Activated T-helper 2 cell treated with anti-CD3 and anti-CD28 coated beads, Interferon-gamma antibody, Interleukin-2, Interleukin-4, amounts not matched to agents 10 μg/mL and 5 μg/mL and 100 μg/mL, durations not matched to agents 14 hours and 24 hours and 36 hours (primary cell): ENCODE measurements at regions of chr4 and their contacts with region 1.

Region 1: GRCh38 chr4:168153596-168154440 is 61.5 kb downstream of the ANXA10 start:
- DNase-seq: peak; percentile 23
- H3K4me3 Mint-ChIP-seq: no peak overlapping the region
- H3K27ac Mint-ChIP-seq: no peak overlapping the region
- H3K4me1 Mint-ChIP-seq: peaks cover 1% of the 10 kb centered on the region
- H3K27me3 Mint-ChIP-seq: peaks cover 5% of the 10 kb centered on the region

Region 2: DNA sequence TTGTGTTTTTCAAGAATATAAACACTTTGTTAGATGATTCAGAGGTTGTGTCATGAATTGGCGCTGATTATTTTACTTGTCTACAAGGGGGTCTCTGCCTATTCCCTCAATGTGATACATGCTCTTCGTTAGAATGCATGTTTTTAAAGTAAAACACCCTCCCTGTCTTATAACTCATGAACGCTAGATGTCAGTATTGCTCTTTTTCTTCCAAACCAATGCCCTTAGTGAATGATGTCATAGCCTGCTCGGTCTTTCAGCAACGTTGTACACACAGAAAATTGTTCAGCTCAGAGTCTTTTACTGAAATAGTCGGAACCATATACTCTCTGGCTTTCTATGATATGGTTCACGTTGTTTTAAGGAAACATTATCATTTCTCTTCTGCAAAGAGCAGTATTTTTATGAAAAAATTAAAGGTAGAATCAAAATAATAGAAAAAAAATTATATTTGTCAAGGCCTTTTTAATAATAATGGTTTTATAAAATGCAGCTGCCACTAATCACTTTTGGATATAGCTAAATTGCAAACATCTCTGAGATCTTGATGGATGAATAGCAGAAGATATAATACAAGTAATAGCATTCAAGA is 1987.9 kb before region 1 on chr4:
- intact Hi-C with region 1: loop called (anchors 10 kb)
- DNase-seq: no peak
- H3K4me3 Mint-ChIP-seq: no peak overlapping the region
- H3K27ac Mint-ChIP-seq: no peak overlapping the region
- H3K4me1 Mint-ChIP-seq: no peaks in the 10 kb centered on the region
- H3K27me3 Mint-ChIP-seq: no peaks in the 10 kb centered on the region

Region 3: DNA sequence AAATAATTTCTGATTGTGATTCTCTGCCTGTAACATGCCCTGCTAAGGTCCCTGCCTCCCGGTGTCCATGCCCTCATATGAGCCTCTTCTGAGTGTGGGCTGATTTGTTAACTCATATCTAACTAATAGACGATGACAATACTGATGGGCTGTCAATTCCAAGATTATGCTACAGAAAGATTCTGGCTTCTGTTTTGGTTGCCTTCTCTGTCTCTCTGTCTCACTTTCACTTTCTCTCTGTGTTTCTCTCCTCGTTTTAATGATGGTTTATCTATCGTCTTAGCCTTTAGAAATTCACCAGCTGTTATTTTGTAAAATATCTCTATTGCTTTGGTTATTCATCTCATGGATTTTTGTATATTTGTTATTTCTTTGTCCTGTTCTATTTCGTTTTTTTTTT is 374.0 kb before region 1 on chr4:
- intact Hi-C with region 1: loop called (anchors 10 kb)
- DNase-seq: no peak
- H3K4me3 Mint-ChIP-seq: no peak overlapping the region
- H3K27ac Mint-ChIP-seq: no peak overlapping the region
- H3K4me1 Mint-ChIP-seq: no peaks in the 10 kb centered on the region
- H3K27me3 Mint-ChIP-seq: no peaks in the 10 kb centered on the region

Region 4: DNA sequence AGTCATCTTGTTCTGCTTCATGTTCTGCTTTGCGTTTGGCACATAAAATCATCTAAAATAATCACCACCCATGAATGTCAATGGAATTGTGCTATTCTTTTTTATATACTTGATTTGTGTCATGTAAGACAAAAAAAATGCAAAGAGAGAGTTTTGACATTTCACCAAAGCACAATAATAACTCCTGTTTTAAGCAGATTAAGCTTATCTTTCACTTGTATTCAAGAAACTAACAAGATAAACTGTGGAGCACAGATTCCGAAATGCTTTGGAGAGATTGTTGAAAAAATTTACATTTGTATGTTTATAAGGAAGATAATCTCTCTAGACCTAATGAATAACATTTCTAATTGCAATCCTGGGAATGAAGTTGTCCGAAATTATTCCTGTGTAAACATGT is 286.6 kb before region 1 on chr4:
- intact Hi-C with region 1: no loop called
- DNase-seq: no peak
- H3K4me3 Mint-ChIP-seq: no peak overlapping the region
- H3K27ac Mint-ChIP-seq: no peak overlapping the region
- H3K4me1 Mint-ChIP-seq: no peaks in the 10 kb centered on the region
- H3K27me3 Mint-ChIP-seq: no peaks in the 10 kb centered on the region

Region 5: GRCh38 chr4:168551945-168552695 is 398.3 kb after region 1 on chr4:
- intact Hi-C with region 1: no loop called
- DNase-seq: no peak
- H3K4me3 Mint-ChIP-seq: no peak overlapping the region
- H3K27ac Mint-ChIP-seq: no peak overlapping the region
- H3K4me1 Mint-ChIP-seq: no peaks in the 10 kb centered on the region
- H3K27me3 Mint-ChIP-seq: peaks cover 10% of the 10 kb centered on the region